ENCODE measurements at regions of chr18 and their contacts with region 1.

Region 1: GRCh38 chr18:839224-840022 is 27.4 kb upstream of the YES1 start:
- DNase-seq: peak; percentile 91 to 97 (median 92)
- ATAC-seq: peak; percentile 91
- H3K4me3 ChIP-seq: no peak overlapping the region
- H3K27ac ChIP-seq: peak overlapping the region; percentile 83
- H3K4me1 ChIP-seq: peaks cover 10 to 30% of the 10 kb centered on the region in 2 experiments
- H3K27me3 ChIP-seq: no peaks in the 10 kb centered on the region
- CTCF ChIP-seq: peak; percentile 95 to 100 (median 97)
- EP300 ChIP-seq: no peak
- POLR2A ChIP-seq: no peak
- RAD21 ChIP-seq: peak; percentile 83 to 85

Region 2: DNA sequence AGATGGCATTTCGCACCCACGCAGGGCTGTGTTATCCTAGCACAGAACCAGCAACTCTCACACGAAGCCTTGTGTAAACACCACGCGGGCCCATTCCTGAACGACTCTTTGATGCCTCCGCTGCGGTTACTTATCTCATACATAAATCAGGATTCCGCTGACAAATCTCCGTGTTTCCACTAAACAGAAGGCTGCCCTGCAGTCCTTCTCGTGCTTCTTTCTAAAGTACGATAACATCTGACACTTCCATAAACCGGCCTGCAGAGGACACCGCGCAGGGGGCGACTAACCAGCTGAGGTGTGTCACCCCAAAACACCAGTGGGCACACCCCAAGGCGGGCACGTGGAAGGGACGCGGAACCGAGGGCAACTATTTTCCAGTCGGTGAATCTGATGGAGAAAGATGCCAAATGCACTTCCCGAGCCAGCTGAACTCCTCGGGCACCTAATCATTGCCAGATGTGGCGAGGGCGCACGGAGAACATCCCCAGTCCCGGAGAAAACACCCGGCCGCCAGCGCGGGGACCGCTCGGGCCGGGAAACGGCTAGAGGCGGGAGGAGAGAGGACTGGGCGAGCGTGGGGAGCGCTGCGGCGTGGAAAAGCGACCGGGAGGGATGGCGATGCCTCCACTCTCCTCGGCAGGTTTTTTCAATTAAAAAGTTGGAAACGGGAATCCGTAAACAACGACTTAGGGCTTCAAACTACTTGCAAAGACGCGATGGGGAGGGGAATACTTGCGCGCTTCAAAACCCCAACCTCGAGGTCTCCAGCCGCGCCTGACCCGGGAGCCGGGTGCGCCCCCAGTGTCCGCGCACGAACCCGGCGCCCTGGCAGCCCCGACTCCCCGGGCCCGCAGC is 339.6 kb before region 1 on chr18:
- CTCF ChIA-PET with region 1: no interaction called
- POLR2A ChIA-PET with region 1: no interaction called
- in situ Hi-C with region 1: no loop called
- intact Hi-C with region 1: loop called (anchors 10 kb)
- DNase-seq: peak in 1 of 4 experiments; percentile 14
- ATAC-seq: no peak
- H3K4me3 ChIP-seq: no peak overlapping the region
- H3K27ac ChIP-seq: no peak overlapping the region
- H3K4me1 ChIP-seq: peaks cover 0 to 18% of the 10 kb centered on the region in 2 experiments; a peak in 2 of 5 replicates
- H3K27me3 ChIP-seq: peaks cover 31 to 37% of the 10 kb centered on the region in 2 experiments
- CTCF ChIP-seq: no peak
- EP300 ChIP-seq: no peak
- POLR2A ChIP-seq: no peak
- RAD21 ChIP-seq: no peak

Region 3: GRCh38 chr18:623761-624620 is 215.4 kb before region 1 on chr18:
- CTCF ChIA-PET with region 1: interaction called, 8 read pairs
- POLR2A ChIA-PET with region 1: no interaction called
- in situ Hi-C with region 1: loop called (anchors 5 kb)
- intact Hi-C with region 1: loop called (anchors 1 kb)
- DNase-seq: peak; percentile 61 to 85 (median 64)
- ATAC-seq: peak; percentile 95
- H3K4me3 ChIP-seq: no peak overlapping the region
- H3K27ac ChIP-seq: no peak overlapping the region
- H3K4me1 ChIP-seq: peaks cover 3 to 4% of the 10 kb centered on the region in 2 experiments; a peak in 3 of 5 replicates
- H3K27me3 ChIP-seq: peaks cover 0 to 5% of the 10 kb centered on the region in 2 experiments; a peak in 2 of 5 replicates
- CTCF ChIP-seq: peak; percentile 78 to 85 (median 82)
- EP300 ChIP-seq: no peak
- POLR2A ChIP-seq: no peak
- RAD21 ChIP-seq: peak; percentile 70 to 81

Region 4: DNA sequence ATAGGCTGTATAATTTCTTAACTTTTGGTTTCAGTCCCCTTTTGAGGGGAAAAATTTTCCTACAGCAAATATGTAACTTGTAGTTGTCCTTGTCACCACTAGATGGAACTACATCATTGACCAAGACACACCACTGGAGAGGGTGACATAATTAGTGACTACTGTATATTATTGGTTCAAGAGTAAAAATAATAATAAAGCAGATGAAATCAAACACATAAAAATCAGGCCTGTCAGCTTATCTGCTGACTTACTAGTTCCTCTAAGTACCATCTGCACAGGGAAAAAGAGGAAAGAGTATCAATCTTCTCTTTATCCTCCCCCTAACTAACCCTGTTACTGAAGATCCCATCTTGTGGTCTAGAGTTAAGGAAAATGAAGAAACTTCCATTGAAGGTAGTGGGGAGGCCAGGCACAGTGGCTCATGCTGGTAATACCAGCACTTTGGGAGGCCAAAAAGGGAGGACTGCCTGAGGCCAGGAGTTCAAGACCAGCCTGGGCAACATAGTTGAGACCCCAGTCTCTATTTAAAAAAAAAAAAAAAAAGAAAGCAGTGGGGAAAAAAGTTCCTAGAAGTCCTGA is 97.4 kb before region 1 on chr18:
- CTCF ChIA-PET with region 1: interaction called, 42 read pairs
- POLR2A ChIA-PET with region 1: interaction called, 5 read pairs
- in situ Hi-C with region 1: loop called (anchors 5 kb)
- intact Hi-C with region 1: no loop called
- DNase-seq: peak; percentile 58 to 69 (median 66)
- ATAC-seq: peak; percentile 90
- H3K4me3 ChIP-seq: no peak overlapping the region
- H3K27ac ChIP-seq: no peak overlapping the region
- H3K4me1 ChIP-seq: no peaks in the 10 kb centered on the region
- H3K27me3 ChIP-seq: no peaks in the 10 kb centered on the region
- CTCF ChIP-seq: peak; percentile 69 to 92 (median 70); a peak in 5 of 6 replicates
- EP300 ChIP-seq: no peak
- POLR2A ChIP-seq: no peak
- RAD21 ChIP-seq: peak; percentile 96 to 97

Region 5: GRCh38 chr18:812376-813171 is 26.8 kb before region 1 on chr18:
- CTCF ChIA-PET with region 1: no interaction called
- POLR2A ChIA-PET with region 1: interaction called, 16 read pairs
- in situ Hi-C with region 1: no loop called
- intact Hi-C with region 1: no loop called
- DNase-seq: peak; percentile 94 to 97 (median 96)
- ATAC-seq: peak; percentile 80
- H3K4me3 ChIP-seq: peak overlapping the region; percentile 90
- H3K27ac ChIP-seq: peak overlapping the region; percentile 97
- H3K4me1 ChIP-seq: peaks cover 32 to 41% of the 10 kb centered on the region in 2 experiments
- H3K27me3 ChIP-seq: no peaks in the 10 kb centered on the region
- CTCF ChIP-seq: no peak
- EP300 ChIP-seq: peak; percentile 55
- POLR2A ChIP-seq: peak; percentile 98
- RAD21 ChIP-seq: peak; percentile 14 to 27; a peak in 2 of 4 replicates

Measured in K562 (cell line).